Activated B cell treated with CpG ODN at 0.5 μM for 24 hours (primary cell): ENCODE measurements at regions of chr17 and their contacts with region 1.

Region 1: DNA sequence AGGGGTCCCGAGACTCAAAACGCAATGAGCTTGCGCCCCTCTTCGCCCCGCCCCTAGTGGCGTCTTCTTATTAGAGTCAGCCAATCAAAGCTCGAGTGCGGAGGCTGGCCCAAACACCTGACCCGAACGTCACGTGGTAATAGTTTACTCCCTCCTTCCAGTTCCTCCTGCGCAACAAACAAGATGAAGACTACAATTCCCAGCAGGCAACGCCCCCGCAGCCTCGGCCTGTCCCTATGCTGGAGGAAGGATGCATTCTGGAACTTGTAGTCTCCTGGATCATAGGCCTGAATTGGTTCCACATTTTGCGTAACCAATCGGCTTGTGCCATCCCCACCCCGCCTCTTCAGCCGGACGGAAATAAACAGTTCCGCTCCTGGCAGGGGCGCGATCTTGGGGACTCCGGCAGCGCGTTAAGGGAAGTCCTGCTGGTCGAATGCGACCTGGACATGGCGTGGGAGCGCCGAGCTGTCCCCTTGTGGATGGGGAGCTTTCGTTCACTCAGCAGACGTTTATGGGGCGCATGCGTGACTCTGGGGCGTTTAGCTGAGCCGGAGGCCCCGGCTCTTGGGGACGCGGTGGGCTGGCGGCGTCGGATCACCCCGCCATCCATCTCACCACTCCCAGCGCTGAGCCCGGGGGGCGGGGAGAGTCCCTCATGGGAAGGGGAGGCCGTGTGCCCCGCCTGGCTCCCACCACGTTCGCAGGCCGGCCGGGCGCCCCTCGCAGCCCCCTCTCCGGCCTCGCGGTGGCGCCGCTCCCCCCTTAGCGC is at the start of gene WBP2:
- DNase-seq: peak; percentile 84
- ATAC-seq: peak; percentile 87
- H3K4me3 Mint-ChIP-seq: no peak within 1 kb of the TSS
- H3K27ac Mint-ChIP-seq: peak within 1 kb of the TSS; percentile 79
- H3K4me1 Mint-ChIP-seq: peaks cover 48% of the 10 kb centered on the region
- H3K27me3 Mint-ChIP-seq: no peaks in the 10 kb centered on the region
- CTCF ChIP-seq: no peak
- total RNA-seq, gene WBP2: 66.0 and 68.7 TPM in 2 replicates

Region 2: GRCh38 chr17:75784473-75785015 is 71.0 kb before region 1 on chr17 and contains the start of gene UNK:
- CTCF ChIA-PET with region 1: interaction called, 3 read pairs
- POLR2A ChIA-PET with region 1: interaction called, 71 read pairs
- intact Hi-C with region 1: loop called (anchors 1 kb)
- DNase-seq: peak; percentile 89
- ATAC-seq: peak; percentile 73
- H3K4me3 Mint-ChIP-seq: peak within 1 kb of the TSS; percentile 86
- H3K27ac Mint-ChIP-seq: peak within 1 kb of the TSS; percentile 99
- H3K4me1 Mint-ChIP-seq: peaks cover 57% of the 10 kb centered on the region
- H3K27me3 Mint-ChIP-seq: no peaks in the 10 kb centered on the region
- CTCF ChIP-seq: no peak
- total RNA-seq, gene UNK: 52.3 and 61.2 TPM in 2 replicates

Region 3: DNA sequence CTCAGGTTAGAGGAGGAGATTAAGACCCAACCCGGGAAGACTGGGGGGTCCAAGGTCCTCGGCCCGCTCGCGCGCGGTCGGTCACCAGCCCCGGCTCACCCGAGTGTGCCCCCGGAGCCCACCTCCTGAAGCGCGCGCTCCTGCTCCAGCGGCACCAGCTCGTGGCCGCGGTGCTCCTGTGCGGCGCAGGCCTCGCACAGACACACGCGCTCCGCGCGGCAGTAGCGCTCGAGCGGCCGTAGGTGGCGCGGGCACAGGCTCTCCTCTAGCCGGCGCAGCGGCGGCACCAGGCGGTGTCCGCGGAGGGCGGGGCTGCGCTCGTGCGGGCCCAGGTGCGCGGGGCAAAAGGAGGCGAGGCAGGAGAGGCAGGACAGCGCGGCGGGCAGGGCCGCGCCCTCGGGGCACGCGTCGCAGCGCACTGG is 22.3 kb after region 1 on chr17:
- CTCF ChIA-PET with region 1: interaction called, 34 read pairs
- POLR2A ChIA-PET with region 1: interaction called, 129 read pairs
- intact Hi-C with region 1: loop called (anchors 1 kb)
- DNase-seq: peak; percentile 73
- ATAC-seq: peak; percentile 83
- H3K4me3 Mint-ChIP-seq: peak overlapping the region; percentile 82
- H3K27ac Mint-ChIP-seq: peak overlapping the region; percentile 79
- H3K4me1 Mint-ChIP-seq: peaks cover 28% of the 10 kb centered on the region
- H3K27me3 Mint-ChIP-seq: peaks cover 8% of the 10 kb centered on the region
- CTCF ChIP-seq: no peak

Region 4: DNA sequence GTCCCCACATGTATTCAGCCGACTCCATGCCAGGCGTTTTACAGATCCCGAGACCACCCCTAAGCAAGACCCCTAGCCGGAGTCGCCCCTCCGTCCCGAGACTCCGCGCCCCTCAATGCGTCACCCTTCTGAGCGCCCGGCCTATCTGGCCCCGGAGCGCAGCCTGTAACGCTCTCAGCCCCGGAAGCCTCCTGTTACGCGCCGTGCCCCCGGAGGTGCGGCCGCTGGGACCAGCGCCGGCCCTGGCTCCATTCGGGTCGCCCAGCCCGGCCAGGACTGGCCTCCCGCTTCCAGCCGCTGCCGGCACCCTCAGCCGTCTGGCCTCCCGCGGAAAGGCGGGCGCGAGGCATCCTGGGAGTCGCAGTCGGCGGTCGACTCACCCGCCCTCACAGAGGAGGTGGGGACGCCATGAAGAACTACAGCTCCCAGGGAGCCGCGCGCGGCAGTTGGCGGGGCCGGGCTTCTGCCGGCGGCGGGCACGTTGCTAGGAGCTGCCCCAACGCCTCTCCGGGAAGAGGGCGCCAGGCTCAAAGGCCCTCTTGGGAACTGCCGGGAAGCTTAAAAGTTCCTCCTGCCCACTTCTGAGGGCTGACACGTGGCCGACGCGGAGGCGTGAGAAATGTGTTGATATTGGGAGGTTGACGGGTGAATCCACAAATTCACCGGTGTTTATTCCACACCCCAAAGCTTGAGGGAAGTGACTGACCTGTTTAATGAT is 85.4 kb after region 1 on chr17 and contains the start of gene FBF1:
- CTCF ChIA-PET with region 1: no interaction called
- POLR2A ChIA-PET with region 1: interaction called, 6 read pairs
- intact Hi-C with region 1: loop called (anchors 2 kb)
- DNase-seq: peak; percentile 83
- ATAC-seq: peak; percentile 100
- H3K4me3 Mint-ChIP-seq: peak within 1 kb of the TSS; percentile 86
- H3K27ac Mint-ChIP-seq: peak within 1 kb of the TSS; percentile 61
- H3K4me1 Mint-ChIP-seq: peaks cover 13% of the 10 kb centered on the region
- H3K27me3 Mint-ChIP-seq: no peaks in the 10 kb centered on the region
- CTCF ChIP-seq: no peak
- total RNA-seq, gene FBF1: 13.2 and 15.1 TPM in 2 replicates

Region 5: DNA sequence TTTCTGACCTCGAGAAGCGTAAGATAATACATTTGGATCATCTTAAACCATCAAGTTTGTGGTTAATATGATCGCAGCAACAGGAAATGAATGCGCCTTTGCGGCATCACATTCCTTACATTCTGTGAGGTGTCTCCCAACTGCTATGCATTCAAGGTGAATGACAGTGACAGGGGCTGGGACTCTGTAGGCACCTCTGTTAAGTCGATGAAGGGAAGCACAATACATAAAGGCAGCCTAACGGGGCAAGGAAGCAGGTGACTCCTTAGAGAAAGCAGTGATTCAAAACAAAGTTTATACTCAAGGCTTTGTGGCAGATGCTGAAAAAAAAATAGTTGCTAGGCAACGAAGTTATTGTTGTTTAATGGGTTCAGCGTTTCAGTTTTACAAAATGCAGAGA is 193.2 kb after region 1 on chr17:
- CTCF ChIA-PET with region 1: no interaction called
- POLR2A ChIA-PET with region 1: no interaction called
- intact Hi-C with region 1: no loop called
- DNase-seq: no peak
- ATAC-seq: no peak
- H3K4me3 Mint-ChIP-seq: no peak overlapping the region
- H3K27ac Mint-ChIP-seq: no peak overlapping the region
- H3K4me1 Mint-ChIP-seq: peaks cover 6% of the 10 kb centered on the region
- H3K27me3 Mint-ChIP-seq: no peaks in the 10 kb centered on the region
- CTCF ChIP-seq: no peak

Region 6: DNA sequence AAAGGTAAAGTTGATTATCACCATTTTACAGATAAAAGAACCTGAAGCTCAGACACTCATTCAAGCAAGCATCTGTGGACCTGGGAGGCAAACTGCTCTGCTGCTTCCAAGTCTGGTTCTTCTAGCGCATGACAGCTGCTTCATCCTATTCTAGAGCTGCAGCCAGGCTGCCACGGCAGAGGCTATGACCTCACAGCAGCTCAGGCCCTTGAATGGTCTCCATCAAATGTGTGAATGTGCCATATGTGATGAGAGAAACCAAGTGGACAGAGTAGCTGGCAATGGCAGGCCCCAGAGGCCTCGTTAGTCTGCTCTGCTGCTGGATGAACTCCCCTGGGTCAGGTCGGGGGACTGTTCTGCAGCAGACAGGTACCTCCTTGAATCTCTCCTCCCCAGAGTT is 316.2 kb after region 1 on chr17:
- CTCF ChIA-PET with region 1: no interaction called
- POLR2A ChIA-PET with region 1: no interaction called
- intact Hi-C with region 1: no loop called
- DNase-seq: no peak
- ATAC-seq: no peak
- H3K4me3 Mint-ChIP-seq: no peak overlapping the region
- H3K27ac Mint-ChIP-seq: no peak overlapping the region
- H3K4me1 Mint-ChIP-seq: no peaks in the 10 kb centered on the region
- H3K27me3 Mint-ChIP-seq: no peaks in the 10 kb centered on the region
- CTCF ChIP-seq: no peak

Region 7: GRCh38 chr17:76271669-76272540 is 416.4 kb after region 1 on chr17:
- CTCF ChIA-PET with region 1: no interaction called
- POLR2A ChIA-PET with region 1: no interaction called
- intact Hi-C with region 1: loop called (anchors 5 kb)
- DNase-seq: peak; percentile 86
- ATAC-seq: peak; percentile 64
- H3K4me3 Mint-ChIP-seq: peak overlapping the region; percentile 70
- H3K27ac Mint-ChIP-seq: peak overlapping the region; percentile 94
- H3K4me1 Mint-ChIP-seq: peaks cover 94% of the 10 kb centered on the region
- H3K27me3 Mint-ChIP-seq: no peaks in the 10 kb centered on the region
- CTCF ChIP-seq: no peak